GM12878 (cell line): ENCODE measurements at regions of chr14 and their contacts with region 1.

Region 1: DNA sequence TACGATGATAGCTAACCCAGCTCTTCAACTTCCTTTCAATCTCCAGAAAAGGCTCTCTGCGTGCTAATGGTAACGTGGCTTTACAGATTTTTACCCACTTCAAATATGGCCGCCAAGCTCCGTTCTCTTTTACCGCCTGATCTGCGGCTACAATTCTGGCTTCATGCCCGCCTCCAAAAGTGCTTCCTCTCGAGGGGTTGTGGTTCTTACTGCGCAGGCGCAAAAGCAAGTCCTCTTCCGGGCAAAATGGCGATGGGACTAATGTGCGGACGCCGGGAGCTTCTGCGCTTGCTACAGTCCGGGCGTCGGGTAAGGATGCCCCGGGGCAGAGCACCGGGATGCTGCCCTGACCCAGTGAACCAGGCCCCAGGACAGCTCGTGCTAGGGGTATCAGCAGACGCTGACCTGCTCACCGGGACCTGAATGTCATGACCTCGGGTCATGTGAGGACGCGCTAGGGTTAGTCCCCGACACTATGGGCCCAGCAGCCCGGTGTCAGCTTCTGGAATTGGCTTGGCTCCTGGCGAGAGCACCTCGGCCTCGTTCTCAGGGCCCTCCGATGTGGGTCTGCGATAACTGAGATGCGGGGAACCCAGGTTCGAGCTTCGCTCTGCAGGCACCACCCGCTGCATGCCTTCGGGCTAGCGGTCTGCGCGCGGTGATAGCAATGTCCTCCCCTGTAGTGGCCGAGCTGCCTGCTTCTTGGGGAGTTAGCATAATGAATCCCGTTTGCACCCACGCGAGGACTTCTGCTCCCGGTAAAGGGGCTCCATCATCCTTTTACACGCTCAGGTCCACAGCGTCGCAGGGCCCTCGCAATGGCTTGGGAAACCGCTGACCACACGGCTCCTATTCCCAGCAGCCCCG is at the start of gene OXA1L:
- DNase-seq: peak; percentile 92
- ATAC-seq: peak; percentile 89
- H3K4me3 ChIP-seq: peak within 1 kb of the TSS; percentile 91
- H3K27ac ChIP-seq: peak within 1 kb of the TSS; percentile 98
- H3K4me1 ChIP-seq: no peaks in the 10 kb centered on the region; the same call in 1 of the 2 replicates
- H3K27me3 ChIP-seq: no peaks in the 10 kb centered on the region
- CTCF ChIP-seq: no peak
- EP300 ChIP-seq: no peak
- POLR2A ChIP-seq: peak; percentile 92
- RAD21 ChIP-seq: no peak
- polyA plus RNA-seq, gene OXA1L: 110 to 116 TPM

Region 2: DNA sequence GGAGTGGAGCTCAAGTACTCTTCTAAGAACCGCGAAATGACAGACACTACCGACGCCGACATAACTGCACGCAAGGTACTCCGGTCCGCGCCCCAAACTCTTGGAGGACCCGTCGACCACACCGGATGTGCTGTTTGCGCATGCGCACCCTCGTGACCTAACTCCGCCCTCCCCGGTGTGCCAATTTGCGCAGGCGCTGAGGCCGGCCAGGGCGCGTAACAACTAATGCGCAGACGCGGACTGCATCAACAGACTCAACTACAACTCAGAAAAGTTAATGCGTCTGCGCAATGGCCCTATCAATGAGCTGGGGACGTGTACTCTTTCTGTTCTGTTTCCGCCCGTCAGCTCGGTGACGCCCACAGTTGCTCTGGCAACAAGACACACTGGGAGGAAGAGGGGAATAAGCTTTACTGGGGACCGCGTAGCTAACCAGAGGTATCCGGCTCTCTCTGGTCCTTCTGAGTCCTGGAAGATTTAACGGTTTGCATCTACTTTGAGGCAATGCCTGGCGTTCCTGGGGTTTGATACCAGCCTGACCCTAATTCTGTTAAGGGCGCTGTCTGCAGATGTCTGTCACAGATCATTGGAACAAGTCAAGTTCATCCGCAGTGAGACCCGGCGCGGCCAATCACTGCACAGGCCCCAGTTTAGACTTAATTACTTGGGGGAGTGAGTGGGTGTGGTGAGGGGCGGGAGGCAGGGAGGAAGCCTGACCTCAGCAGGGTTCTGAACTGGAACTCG is 177.4 kb before region 1 on chr14 and contains the start of gene DAD1:
- CTCF ChIA-PET with region 1: interaction called, 3 read pairs
- POLR2A ChIA-PET with region 1: interaction called, 10 read pairs
- RAD21 ChIA-PET with region 1: interaction called, 14 read pairs
- SMC1A ChIA-PET with region 1: interaction called, 3 read pairs
- in situ Hi-C with region 1: no loop called
- intact Hi-C with region 1: loop called (anchors 5 kb)
- DNase-seq: peak; percentile 100
- ATAC-seq: peak; percentile 93
- H3K4me3 ChIP-seq: peak within 1 kb of the TSS; percentile 92
- H3K27ac ChIP-seq: peak within 1 kb of the TSS; percentile 91
- H3K4me1 ChIP-seq: peaks cover 20% of the 10 kb centered on the region
- H3K27me3 ChIP-seq: no peaks in the 10 kb centered on the region; a peak in 1 of 4 replicates
- CTCF ChIP-seq: 0 out of 6 replicates have a peak, but pooled peaks of 1 of the 3 experiments have one; percentile 13
- EP300 ChIP-seq: no peak; a peak in 1 of 4 replicates
- POLR2A ChIP-seq: peak; percentile 98
- RAD21 ChIP-seq: no peak
- polyA plus RNA-seq, gene DAD1: 711 to 920 TPM

Region 3: DNA sequence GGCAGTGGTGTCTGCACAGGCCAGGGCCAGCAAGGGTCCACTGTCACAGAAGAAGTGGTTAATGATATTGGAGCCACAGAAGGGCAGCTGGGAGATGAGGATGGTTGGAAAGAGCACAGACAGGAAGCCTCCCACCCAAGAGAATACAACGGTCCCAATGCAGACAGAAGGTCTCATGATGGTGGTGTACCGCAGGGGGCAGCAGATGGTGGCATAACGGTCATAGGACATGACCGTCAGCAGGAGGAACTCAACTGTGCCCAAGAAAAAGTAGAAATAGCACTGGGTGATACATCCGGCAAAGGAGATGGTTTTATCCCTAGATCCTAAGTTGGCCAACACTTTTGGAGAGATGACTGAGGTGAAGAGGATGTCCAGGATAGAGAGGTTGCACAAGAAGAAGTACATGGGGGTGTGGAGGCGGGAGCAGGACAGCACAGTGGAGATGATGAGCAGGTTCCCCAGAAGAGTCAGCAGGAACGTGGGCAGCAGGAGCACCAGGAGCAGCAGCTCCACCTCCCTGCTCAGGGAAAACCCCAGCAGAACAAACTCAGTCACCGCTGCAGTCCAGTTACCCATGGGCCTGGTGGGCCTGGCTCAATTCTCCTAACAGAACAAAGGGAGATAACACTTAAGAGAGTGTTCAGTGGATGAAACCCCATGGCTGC is 132.3 kb before region 1 on chr14:
- CTCF ChIA-PET with region 1: no interaction called
- POLR2A ChIA-PET with region 1: no interaction called
- RAD21 ChIA-PET with region 1: no interaction called
- SMC1A ChIA-PET with region 1: no interaction called
- in situ Hi-C with region 1: no loop called
- intact Hi-C with region 1: no loop called
- DNase-seq: no peak
- ATAC-seq: no peak
- H3K4me3 ChIP-seq: no peak overlapping the region
- H3K27ac ChIP-seq: no peak overlapping the region
- H3K4me1 ChIP-seq: no peaks in the 10 kb centered on the region
- H3K27me3 ChIP-seq: no peaks in the 10 kb centered on the region
- CTCF ChIP-seq: no peak
- EP300 ChIP-seq: no peak
- POLR2A ChIP-seq: no peak
- RAD21 ChIP-seq: no peak

Region 4: DNA sequence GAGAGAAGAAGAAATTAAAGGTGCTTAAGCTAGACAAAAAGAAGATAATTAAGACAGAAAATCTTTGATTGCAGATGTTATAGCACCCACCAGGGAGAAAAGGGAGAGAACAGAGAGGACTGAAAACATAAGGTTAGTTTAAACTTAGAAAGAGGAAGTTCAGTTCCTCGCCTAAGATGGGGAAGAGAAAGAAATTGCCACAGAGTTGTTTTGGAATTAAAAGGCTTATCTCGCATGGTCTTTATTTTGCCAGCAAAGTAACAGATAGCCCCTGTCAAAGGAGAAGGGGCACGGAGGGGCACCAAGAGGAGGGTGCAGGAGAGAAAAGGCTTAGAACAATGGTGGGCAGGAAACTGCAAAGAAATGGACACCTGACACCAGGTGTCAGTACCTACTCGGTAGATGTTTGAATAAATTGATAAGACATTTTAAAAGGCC is 18.0 kb before region 1 on chr14:
- CTCF ChIA-PET with region 1: interaction called, 33 read pairs
- POLR2A ChIA-PET with region 1: interaction called, 5 read pairs
- RAD21 ChIA-PET with region 1: interaction called, 16 read pairs
- SMC1A ChIA-PET with region 1: interaction called, 19 read pairs
- in situ Hi-C with region 1: no loop called
- intact Hi-C with region 1: no loop called
- DNase-seq: no peak
- ATAC-seq: peak; percentile 88
- H3K4me3 ChIP-seq: peak overlapping the region; percentile 43; the same call in 1 of the 2 replicates
- H3K27ac ChIP-seq: peak overlapping the region; percentile 45
- H3K4me1 ChIP-seq: peaks cover 15% of the 10 kb centered on the region
- H3K27me3 ChIP-seq: no peaks in the 10 kb centered on the region
- CTCF ChIP-seq: 0 out of 6 replicates have a peak, but pooled peaks of 1 of the 3 experiments have one; percentile 7
- EP300 ChIP-seq: no peak
- POLR2A ChIP-seq: no peak
- RAD21 ChIP-seq: 0 out of 2 replicates have a peak, but pooled peaks have one; percentile 20

Region 5: DNA sequence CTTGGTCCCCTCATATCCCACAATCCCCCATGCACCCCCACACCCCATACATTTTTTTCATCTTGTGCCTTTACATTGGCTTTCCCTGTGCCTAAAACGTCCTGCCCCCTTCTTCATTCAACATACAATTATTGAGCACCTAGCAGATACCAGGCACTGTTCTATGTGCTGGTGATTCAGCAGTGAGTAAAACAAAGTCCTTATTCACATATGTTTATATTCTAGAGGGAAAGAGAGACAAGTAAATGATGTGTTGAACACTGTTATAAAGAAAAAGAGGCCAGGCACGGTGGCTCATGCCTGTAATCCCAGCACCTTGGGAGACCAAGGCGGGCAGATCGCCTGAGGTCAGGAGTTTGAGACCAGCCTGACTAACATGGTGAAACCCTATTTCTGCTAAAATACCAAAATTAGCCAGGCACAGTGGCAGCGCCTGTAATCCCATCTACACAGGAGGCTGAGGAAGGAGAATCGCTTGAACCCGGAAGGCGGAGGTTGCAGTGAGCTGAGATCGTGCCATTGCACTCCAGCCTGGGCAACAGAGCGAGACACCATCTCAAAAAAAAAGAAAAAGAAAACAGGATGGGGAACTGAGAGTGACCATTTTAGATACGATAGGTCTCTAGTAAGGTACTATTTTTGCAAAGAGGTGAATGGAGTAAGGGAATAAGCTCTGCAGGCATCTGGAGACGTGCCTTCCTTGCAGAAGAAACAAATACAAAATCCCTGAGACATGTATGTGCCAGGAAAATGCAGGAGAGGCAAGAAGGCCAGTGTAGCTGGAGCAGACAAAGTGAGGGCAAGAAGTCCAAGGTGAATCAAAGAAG is 36.4 kb after region 1 on chr14:
- CTCF ChIA-PET with region 1: no interaction called
- POLR2A ChIA-PET with region 1: interaction called, 7 read pairs
- RAD21 ChIA-PET with region 1: interaction called, 6 read pairs
- SMC1A ChIA-PET with region 1: interaction called, 16 read pairs
- in situ Hi-C with region 1: no loop called
- intact Hi-C with region 1: no loop called
- DNase-seq: no peak
- ATAC-seq: peak; percentile 80
- H3K4me3 ChIP-seq: peak overlapping the region; percentile 61
- H3K27ac ChIP-seq: peak overlapping the region; percentile 98
- H3K4me1 ChIP-seq: peaks cover 58% of the 10 kb centered on the region
- H3K27me3 ChIP-seq: no peaks in the 10 kb centered on the region
- CTCF ChIP-seq: no peak
- EP300 ChIP-seq: 0 out of 4 replicates have a peak, but pooled peaks of 1 of the 2 experiments have one; percentile 11
- POLR2A ChIP-seq: no peak
- RAD21 ChIP-seq: no peak